ENCODE measurements at regions of chr6 and their contacts with region 1.

Region 1: GRCh38 chr6:43629505-43630300 is 639 bp upstream of the GTPBP2 start:
- DNase-seq: peak; percentile 64 to 90 (median 75)
- ATAC-seq: peak; percentile 79
- H3K4me3 ChIP-seq: peak overlapping the region; percentile 98
- H3K4me3 Mint-ChIP-seq: peak overlapping the region; percentile 97 to 100 (median 99)
- H3K27ac ChIP-seq: peak overlapping the region; percentile 76
- H3K27ac Mint-ChIP-seq: peak overlapping the region; percentile 90 to 99 (median 98)
- H3K4me1 ChIP-seq: peaks cover 9 to 11% of the 10 kb centered on the region in 2 donors
- H3K4me1 Mint-ChIP-seq: peaks cover 30 to 42% (median 38%) of the 10 kb centered on the region in 7 donors
- H3K27me3 ChIP-seq: no peaks in the 10 kb centered on the region
- H3K27me3 Mint-ChIP-seq: no peaks in the 10 kb centered on the region

Region 2: GRCh38 chr6:42978839-42979522 is 650.7 kb before region 1 on chr6 and contains the start of gene PEX6:
- CTCF ChIA-PET with region 1: no interaction called
- POLR2A ChIA-PET with region 1: no interaction called
- intact Hi-C with region 1: loop called in 1 of 2 experiments (anchors 1 kb)
- DNase-seq: peak; percentile 77 to 98 (median 93)
- ATAC-seq: peak; percentile 97
- H3K4me3 ChIP-seq: peak within 1 kb of the TSS; percentile 90
- H3K4me3 Mint-ChIP-seq: peak within 1 kb of the TSS; percentile 91 to 99 (median 94)
- H3K27ac ChIP-seq: peak within 1 kb of the TSS; percentile 85
- H3K27ac Mint-ChIP-seq: peak within 1 kb of the TSS; percentile 92 to 99 (median 98)
- H3K4me1 ChIP-seq: peaks cover 30 to 32% of the 10 kb centered on the region in 2 donors
- H3K4me1 Mint-ChIP-seq: peaks cover 19 to 61% (median 47%) of the 10 kb centered on the region in 7 donors
- H3K27me3 ChIP-seq: no peaks in the 10 kb centered on the region
- H3K27me3 Mint-ChIP-seq: no peaks in the 10 kb centered on the region
- total RNA-seq, gene PEX6: 14.1 to 42.3 (median 28.0) TPM

Region 3: DNA sequence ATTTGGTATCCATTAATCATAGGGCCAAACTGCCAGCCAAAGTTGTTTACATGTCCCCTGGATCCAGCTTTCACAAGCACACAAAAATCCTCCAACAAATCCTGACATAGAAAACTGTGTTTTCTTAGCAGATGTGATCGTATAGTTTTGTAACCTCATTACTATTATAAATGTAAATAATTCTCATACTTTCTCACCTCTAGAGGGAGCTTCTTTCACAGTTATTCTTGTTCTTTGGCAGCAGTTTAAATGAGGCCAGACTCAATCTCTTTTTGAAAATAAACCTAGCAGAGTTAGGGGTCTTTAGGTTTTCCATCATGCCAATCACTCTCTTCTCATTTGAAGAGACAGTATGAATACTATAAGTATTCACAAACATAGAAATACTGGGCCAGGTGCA is 243.2 kb before region 1 on chr6:
- CTCF ChIA-PET with region 1: no interaction called
- POLR2A ChIA-PET with region 1: no interaction called
- intact Hi-C with region 1: loop called in 1 of 2 experiments (anchors 5 kb)
- DNase-seq: peak in 3 of 9 donors; percentile 43 to 64 (median 44)
- ATAC-seq: no peak
- H3K4me3 ChIP-seq: no peak overlapping the region
- H3K4me3 Mint-ChIP-seq: peak overlapping the region in 4 of 10 donors; percentile 23 to 63 (median 40)
- H3K27ac ChIP-seq: no peak overlapping the region
- H3K27ac Mint-ChIP-seq: peak overlapping the region in 8 of 9 donors; percentile 6 to 95 (median 73)
- H3K4me1 ChIP-seq: peaks cover 46 to 59% of the 10 kb centered on the region in 2 donors
- H3K4me1 Mint-ChIP-seq: peaks cover 54 to 78% (median 72%) of the 10 kb centered on the region in 7 donors
- H3K27me3 ChIP-seq: no peaks in the 10 kb centered on the region
- H3K27me3 Mint-ChIP-seq: peaks cover 0 to 67% (median 4%) of the 10 kb centered on the region in 5 donors

Region 4: GRCh38 chr6:43575772-43576551 is 53.7 kb before region 1 on chr6 and contains the starts of genes POLH and XPO5:
- CTCF ChIA-PET with region 1: no interaction called
- POLR2A ChIA-PET with region 1: no interaction called
- intact Hi-C with region 1: loop called (anchors 1 to 2 kb)
- DNase-seq: peak; percentile 83 to 94 (median 88)
- ATAC-seq: peak; percentile 99
- H3K4me3 ChIP-seq: peak within 1 kb of the TSS; percentile 77
- H3K4me3 Mint-ChIP-seq: peak within 1 kb of the TSS; percentile 90 to 100 (median 98)
- H3K27ac ChIP-seq: peak within 1 kb of the TSS; percentile 89
- H3K27ac Mint-ChIP-seq: peak within 1 kb of the TSS; percentile 78 to 94 (median 92)
- H3K4me1 ChIP-seq: peaks cover 20 to 21% of the 10 kb centered on the region in 2 donors
- H3K4me1 Mint-ChIP-seq: peaks cover 21 to 61% (median 40%) of the 10 kb centered on the region in 7 donors
- H3K27me3 ChIP-seq: no peaks in the 10 kb centered on the region
- H3K27me3 Mint-ChIP-seq: no peaks in the 10 kb centered on the region
- total RNA-seq, gene POLH: 9.1 to 65.6 (median 19.3) TPM
- total RNA-seq, gene XPO5: 35.0 to 107 (median 41.9) TPM

Region 5: GRCh38 chr6:43687437-43688347 is 58.0 kb after region 1 on chr6 and contains the start of gene MRPS18A:
- CTCF ChIA-PET with region 1: interaction called, 3 read pairs
- POLR2A ChIA-PET with region 1: interaction called, 3 read pairs
- intact Hi-C with region 1: loop called (anchors 1 kb)
- DNase-seq: peak; percentile 53 to 82 (median 72)
- ATAC-seq: peak; percentile 97
- H3K4me3 ChIP-seq: peak within 1 kb of the TSS; percentile 98
- H3K4me3 Mint-ChIP-seq: peak within 1 kb of the TSS; percentile 94 to 99 (median 97)
- H3K27ac ChIP-seq: peak within 1 kb of the TSS; percentile 81
- H3K27ac Mint-ChIP-seq: peak within 1 kb of the TSS; percentile 87 to 96 (median 94)
- H3K4me1 ChIP-seq: peaks cover 10 to 22% of the 10 kb centered on the region in 2 donors
- H3K4me1 Mint-ChIP-seq: peaks cover 28 to 55% (median 52%) of the 10 kb centered on the region in 7 donors
- H3K27me3 ChIP-seq: no peaks in the 10 kb centered on the region
- H3K27me3 Mint-ChIP-seq: peaks cover 0 to 3% (median 0%) of the 10 kb centered on the region in 5 donors
- total RNA-seq, gene MRPS18A: 20.9 to 39.2 (median 28.7) TPM